ENCODE measurements at regions of chr5 and their contacts with region 1.

Region 1: GRCh38 chr5:23139338-23140171 is 286.4 kb upstream of the CDH12 start:
- DNase-seq: no peak
- ATAC-seq: peak; percentile 26

Region 2: GRCh38 chr5:22889718-22890117 is 249.8 kb before region 1 on chr5:
- intact Hi-C with region 1: loop called (anchors 1 kb)
- DNase-seq: no peak
- ATAC-seq: no peak